AG04449 (cell line): ENCODE measurements at regions of chr12 and their contacts with region 1.

Region 1: GRCh38 chr12:93098077-93098476 is 169.0 kb upstream of the EEA1 start:
- DNase-seq: no peak
- H3K4me3 ChIP-seq: no peak overlapping the region
- CTCF ChIP-seq: peak; percentile 11

Region 2: DNA sequence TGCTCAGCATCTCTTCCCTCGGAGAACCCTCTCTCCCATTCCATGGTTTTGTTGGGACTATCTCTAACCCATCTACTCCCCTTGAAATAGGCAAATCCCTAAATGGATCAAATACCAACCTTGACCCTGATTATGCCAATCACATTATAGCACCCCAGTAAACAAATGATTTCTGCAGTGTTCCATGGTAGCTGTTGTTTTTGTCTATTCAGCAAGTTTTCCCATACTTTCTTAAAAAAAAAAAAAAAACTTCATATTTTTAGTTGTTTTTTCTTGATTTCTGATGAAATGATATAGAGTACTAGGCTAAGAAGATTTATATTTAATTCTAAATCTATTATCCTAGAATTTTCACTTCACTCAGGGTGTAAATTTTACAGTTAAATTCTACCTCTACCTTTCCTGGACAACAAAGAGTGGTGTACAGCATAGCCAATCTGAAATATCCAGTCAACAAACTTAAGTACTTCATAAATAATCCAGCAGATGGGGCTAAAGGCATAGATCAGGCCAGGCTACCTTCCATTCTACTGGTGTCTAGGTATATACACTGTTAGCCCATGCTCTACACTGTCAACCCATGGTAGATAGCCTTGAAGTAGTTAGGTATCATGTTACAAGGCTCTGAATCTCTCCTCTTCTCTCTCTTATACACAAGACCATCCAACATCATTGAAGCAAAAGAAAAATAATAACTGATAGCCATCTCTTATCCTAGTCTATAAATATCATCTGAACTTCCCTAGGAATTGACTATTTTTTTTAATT is 313.1 kb before region 1 on chr12:
- CTCF ChIA-PET with region 1: no interaction called
- POLR2A ChIA-PET with region 1: no interaction called
- DNase-seq: peak; percentile 23
- H3K4me3 ChIP-seq: no peak overlapping the region
- CTCF ChIP-seq: peak; percentile 46

Region 3: DNA sequence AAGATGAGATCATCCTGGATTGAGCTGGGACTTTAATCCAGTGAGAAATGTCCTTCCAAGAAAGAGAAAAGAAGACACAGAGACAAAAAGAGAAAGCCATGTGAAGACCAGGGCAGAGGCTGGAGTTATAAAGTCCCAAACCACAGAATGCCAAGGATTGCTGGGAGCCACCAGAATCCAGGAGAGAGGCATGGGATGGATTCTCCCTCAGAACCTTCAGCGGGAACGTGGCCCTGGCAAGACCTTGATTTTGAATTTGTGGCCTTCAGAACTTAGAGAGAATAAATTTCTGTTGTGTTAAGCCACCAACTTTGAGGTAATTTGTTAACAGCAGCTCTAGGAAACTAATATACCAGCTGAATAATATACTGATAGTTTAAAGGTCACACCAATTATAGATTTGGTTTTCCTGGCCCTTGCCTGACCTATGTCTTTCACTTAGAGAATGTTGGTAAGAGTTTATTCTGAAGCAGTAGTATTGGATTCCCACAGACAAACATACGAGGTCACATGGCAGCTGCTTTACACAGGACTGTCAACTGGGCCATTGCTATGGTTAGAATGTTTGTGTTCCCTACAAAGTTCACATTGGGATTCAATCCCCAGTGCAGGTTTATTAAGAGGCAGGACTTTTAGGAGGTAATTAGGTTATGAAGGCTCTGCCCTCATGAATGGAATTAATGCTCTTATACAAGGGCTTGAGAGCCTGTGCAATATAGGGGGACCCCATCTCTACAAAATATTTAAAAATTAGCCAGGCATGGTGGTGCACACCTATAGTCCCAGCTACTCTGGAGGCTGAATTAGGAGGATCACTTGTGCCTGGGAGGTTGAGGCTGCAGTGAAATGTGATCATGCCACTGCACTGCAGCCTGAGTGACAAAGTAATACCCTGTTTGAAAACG is 12.4 kb before region 1 on chr12:
- CTCF ChIA-PET with region 1: interaction called, 15 read pairs
- POLR2A ChIA-PET with region 1: no interaction called
- DNase-seq: no peak
- H3K4me3 ChIP-seq: no peak overlapping the region
- CTCF ChIP-seq: no peak

Region 4: DNA sequence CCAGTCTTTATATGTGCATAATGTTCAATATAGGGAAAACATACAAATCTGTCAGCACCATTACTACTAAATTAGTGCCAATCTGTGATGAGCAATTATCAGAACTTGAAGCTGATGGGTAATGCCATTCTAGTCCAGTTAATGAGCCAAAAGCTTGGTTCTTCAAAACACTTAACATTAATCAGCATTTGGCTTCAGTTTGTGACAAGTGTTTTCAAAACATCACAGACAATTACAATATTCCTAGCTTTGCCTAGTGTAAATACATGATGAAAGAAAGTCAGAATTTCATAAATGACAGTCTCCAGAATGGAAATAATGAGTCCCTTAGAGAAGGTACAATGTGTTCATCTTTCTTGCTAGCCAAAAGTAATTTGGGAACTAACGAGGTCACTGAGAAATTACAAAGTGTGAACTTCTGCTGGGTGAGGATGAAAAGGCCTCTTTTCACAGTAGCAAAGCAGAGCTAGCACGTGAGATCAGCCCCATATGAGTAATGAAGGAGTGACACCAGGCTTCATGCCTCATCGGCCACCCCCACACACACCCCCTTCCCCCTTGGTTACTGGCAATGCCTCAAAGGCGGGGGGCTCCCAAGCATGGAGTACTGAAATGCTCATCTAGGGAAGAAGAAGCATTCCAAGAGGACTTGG is 11.6 kb after region 1 on chr12:
- CTCF ChIA-PET with region 1: interaction called, 25 read pairs
- POLR2A ChIA-PET with region 1: no interaction called
- DNase-seq: no peak
- H3K4me3 ChIP-seq: no peak overlapping the region
- CTCF ChIP-seq: no peak

Region 5: GRCh38 chr12:93378373-93379325 is 280.6 kb after region 1 on chr12:
- CTCF ChIA-PET with region 1: interaction called, 14 read pairs
- POLR2A ChIA-PET with region 1: no interaction called
- DNase-seq: peak; percentile 46
- H3K4me3 ChIP-seq: peak overlapping the region; percentile 79
- CTCF ChIP-seq: no peak